ENCODE measurements at regions of chr6 and their contacts with region 1.

Region 1: DNA sequence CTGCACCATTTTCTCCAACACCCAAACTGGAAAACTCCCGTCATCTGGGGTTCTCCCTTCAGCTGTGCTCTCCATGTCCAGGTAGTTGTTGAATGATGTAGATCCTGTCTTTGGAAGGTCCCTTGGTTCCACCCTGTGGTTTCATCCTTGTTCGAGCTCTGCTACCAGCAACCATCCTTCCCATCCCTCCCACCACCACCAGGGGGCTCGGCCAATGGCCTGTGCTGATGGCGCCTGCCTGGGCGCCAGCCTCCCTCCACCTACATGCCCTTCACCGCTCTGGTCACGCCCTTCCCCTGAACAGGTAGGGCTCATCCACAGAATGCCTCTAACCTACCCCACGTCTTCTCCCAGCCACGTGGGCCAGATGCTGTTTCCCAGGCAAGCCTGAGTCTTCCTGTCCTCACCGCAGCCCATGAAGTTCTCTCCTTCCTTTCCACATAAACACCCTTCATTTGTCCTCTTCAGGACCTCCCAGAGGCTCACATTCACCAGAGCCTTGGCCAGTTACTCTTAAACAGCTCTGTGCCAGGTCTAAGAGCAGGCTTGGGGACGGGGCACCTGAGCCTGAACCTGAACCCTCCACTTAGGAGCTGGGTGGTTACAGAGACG is 75.1 kb upstream of the DUSP22 start:
- DNase-seq: no peak
- ATAC-seq: no peak

Region 2: GRCh38 chr6:291697-292505 is 74.7 kb after region 1 on chr6 and contains the start of gene DUSP22:
- intact Hi-C with region 1: loop called in 1 of 2 experiments (anchors 5 kb)
- DNase-seq: peak; percentile 92
- ATAC-seq: peak; percentile 92 to 93
- total RNA-seq, gene DUSP22: 53.9 to 57.4 TPM

Measured in left cardiac atrium (tissue), 4 donors.